ENCODE measurements at regions of chr11 and their contacts with region 1.

Region 1: DNA sequence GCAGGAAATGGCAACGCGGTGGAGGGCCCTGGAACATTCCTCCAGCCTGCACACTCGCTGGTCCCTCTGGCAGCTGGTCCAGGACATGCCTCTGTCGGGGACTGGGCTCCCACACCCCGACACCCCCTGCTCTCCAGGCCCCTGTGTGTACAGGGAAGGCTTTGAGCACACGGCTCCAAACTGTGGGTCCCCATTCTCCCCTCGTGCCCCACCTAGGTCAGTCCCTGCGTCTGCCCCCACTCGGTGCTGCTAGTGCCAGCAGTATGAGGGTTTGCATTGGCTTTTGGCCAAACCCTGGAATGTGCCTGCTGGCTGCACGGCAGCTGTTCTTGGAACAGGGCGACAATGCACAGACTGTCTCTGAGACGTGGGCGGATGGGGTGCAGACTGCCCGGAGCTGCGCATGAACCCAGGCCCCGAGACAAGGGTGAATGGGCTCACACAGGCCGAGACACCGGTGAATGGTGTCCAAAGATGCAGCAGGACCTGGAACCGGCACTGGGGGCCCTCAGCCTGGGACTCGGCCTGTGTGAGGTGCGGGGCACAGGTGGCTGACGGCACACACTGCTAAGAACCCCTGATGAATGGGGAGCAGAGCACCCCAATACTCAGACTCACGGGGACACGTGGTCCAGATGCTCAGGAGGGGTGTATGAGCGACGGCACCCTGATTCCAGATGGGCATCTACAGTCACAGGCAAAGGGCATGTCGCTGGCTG is 7.5 kb upstream of the SYT8 start:
- DNase-seq: peak in 1 of 2 experiments; percentile 33
- H3K4me3 ChIP-seq: no peak overlapping the region
- H3K4me3 Mint-ChIP-seq: no peak overlapping the region
- H3K27ac Mint-ChIP-seq: peak overlapping the region; percentile 87
- H3K4me1 ChIP-seq: peaks cover 66% of the 10 kb centered on the region
- H3K4me1 Mint-ChIP-seq: peaks cover 39% of the 10 kb centered on the region
- H3K27me3 ChIP-seq: no peaks in the 10 kb centered on the region
- H3K27me3 Mint-ChIP-seq: no peaks in the 10 kb centered on the region
- CTCF ChIP-seq: no peak

Region 2: DNA sequence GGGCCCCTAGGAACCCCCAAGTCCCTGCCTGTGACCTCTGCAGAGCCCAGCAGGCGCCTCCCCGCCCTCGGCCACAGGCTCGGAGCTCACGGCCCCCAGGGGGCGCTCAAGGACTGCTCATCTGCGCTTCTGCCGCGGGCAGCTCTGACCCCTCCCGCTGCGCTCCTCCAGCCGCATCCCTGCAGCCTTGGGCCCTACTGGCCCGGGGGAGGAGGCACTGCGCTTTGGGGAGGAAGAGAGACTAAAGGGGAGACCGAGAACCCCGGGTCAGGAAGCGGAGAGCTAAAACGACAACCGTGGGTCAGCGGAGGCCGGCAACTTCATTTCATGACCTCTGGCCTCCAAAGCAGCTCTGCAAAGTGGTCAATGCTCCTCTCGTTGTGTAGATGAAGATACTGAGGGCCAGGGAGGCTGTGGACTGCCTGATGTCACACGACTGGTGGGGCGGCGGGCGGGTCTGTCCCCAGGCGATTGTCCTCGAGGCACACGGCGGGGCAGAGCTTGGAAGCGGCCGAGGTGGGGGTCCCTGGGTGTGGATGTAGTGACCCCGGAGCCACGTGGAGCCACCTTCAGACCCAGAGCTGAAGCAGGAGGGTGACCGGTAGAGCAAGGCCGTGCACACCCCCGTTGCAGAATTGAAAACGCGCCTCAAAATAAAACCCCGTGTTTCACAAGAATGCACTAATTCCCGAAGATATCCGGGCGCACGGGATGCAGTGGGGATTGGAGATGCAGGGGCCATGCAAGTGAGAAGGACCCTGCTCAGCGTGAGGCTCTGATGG is 133.0 kb before region 1 on chr11:
- CTCF ChIA-PET with region 1: interaction called, 52 read pairs
- POLR2A ChIA-PET with region 1: interaction called, 6 read pairs
- intact Hi-C with region 1: loop called (anchors 1 kb)
- DNase-seq: peak; percentile 86 to 93
- H3K4me3 ChIP-seq: peak overlapping the region; percentile 49
- H3K4me3 Mint-ChIP-seq: peak overlapping the region; percentile 83
- H3K27ac Mint-ChIP-seq: peak overlapping the region; percentile 91
- H3K4me1 ChIP-seq: peaks cover 44% of the 10 kb centered on the region
- H3K4me1 Mint-ChIP-seq: peaks cover 34% of the 10 kb centered on the region
- H3K27me3 ChIP-seq: no peaks in the 10 kb centered on the region
- H3K27me3 Mint-ChIP-seq: no peaks in the 10 kb centered on the region
- CTCF ChIP-seq: peak; percentile 93 to 95

Region 3: DNA sequence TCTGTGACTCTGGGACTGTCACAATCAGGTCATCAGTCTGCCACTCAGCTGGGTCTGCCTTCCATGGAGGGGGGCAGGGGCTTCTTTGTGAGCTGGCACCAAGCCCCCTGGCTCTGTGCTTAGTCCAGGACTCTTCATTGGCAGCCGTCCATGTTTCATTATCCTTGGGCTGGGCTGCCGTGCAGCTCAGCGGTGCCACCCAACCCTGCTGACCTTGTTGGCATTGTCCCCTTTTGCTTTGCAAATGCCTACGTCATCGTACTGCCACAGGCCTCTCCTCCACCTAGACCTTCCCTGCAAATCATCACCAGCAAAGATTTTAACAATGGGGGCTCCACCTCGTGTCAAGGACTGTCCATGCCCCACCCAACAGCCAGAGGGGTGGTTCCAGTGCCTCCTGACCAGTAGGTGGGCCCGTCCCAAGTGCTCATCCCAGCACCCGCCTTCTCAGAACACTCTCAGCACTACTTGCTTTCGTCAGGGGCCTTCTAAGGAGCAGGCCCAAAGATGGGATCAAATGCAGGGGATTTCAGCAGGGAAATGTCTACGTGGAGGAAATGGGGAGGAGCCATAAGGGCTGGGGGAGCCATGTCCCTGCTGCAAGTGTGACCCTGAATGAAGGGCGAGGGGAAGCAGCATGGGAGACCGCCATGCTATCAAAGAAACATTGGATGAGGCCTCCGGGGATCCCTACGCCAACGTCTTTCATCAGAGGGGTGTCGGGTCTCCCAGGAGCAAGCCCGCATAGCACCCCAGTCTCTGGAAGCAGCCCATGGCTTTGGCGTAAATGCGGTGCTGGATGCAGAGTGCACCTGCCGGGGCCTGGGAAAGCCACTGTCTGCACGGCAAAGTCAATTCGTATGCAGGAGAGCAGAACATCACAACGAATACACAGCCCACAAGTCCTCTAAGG is 112.0 kb before region 1 on chr11:
- CTCF ChIA-PET with region 1: no interaction called
- POLR2A ChIA-PET with region 1: no interaction called
- intact Hi-C with region 1: no loop called
- DNase-seq: peak in 1 of 2 experiments; percentile 15
- H3K4me3 ChIP-seq: no peak overlapping the region
- H3K4me3 Mint-ChIP-seq: no peak overlapping the region
- H3K27ac Mint-ChIP-seq: no peak overlapping the region
- H3K4me1 ChIP-seq: no peaks in the 10 kb centered on the region
- H3K4me1 Mint-ChIP-seq: no peaks in the 10 kb centered on the region
- H3K27me3 ChIP-seq: no peaks in the 10 kb centered on the region
- H3K27me3 Mint-ChIP-seq: peaks cover 3% of the 10 kb centered on the region
- CTCF ChIP-seq: no peak

Region 4: GRCh38 chr11:1876361-1877063 is 49.3 kb after region 1 on chr11:
- CTCF ChIA-PET with region 1: interaction called, 10 read pairs
- POLR2A ChIA-PET with region 1: no interaction called
- intact Hi-C with region 1: loop called (anchors 5 kb)
- DNase-seq: peak in 1 of 2 experiments; percentile 63
- H3K4me3 ChIP-seq: no peak overlapping the region
- H3K4me3 Mint-ChIP-seq: no peak overlapping the region
- H3K27ac Mint-ChIP-seq: no peak overlapping the region
- H3K4me1 ChIP-seq: peaks cover 7% of the 10 kb centered on the region
- H3K4me1 Mint-ChIP-seq: no peaks in the 10 kb centered on the region
- H3K27me3 ChIP-seq: no peaks in the 10 kb centered on the region
- H3K27me3 Mint-ChIP-seq: no peaks in the 10 kb centered on the region
- CTCF ChIP-seq: peak; percentile 61 to 63

Region 5: GRCh38 chr11:1917671-1918516 is 90.6 kb after region 1 on chr11:
- CTCF ChIA-PET with region 1: interaction called, 4 read pairs
- POLR2A ChIA-PET with region 1: no interaction called
- intact Hi-C with region 1: loop called (anchors 1 kb)
- DNase-seq: no peak
- H3K4me3 ChIP-seq: no peak overlapping the region
- H3K4me3 Mint-ChIP-seq: no peak overlapping the region
- H3K27ac Mint-ChIP-seq: no peak overlapping the region
- H3K4me1 ChIP-seq: no peaks in the 10 kb centered on the region
- H3K4me1 Mint-ChIP-seq: no peaks in the 10 kb centered on the region
- H3K27me3 ChIP-seq: no peaks in the 10 kb centered on the region
- H3K27me3 Mint-ChIP-seq: no peaks in the 10 kb centered on the region
- CTCF ChIP-seq: peak; percentile 49 to 52

Region 6: GRCh38 chr11:1988667-1989317 is 161.5 kb after region 1 on chr11:
- CTCF ChIA-PET with region 1: interaction called, 11 read pairs
- POLR2A ChIA-PET with region 1: interaction called, 3 read pairs
- intact Hi-C with region 1: no loop called
- DNase-seq: no peak
- H3K4me3 ChIP-seq: no peak overlapping the region
- H3K4me3 Mint-ChIP-seq: no peak overlapping the region
- H3K27ac Mint-ChIP-seq: no peak overlapping the region
- H3K4me1 ChIP-seq: no peaks in the 10 kb centered on the region
- H3K4me1 Mint-ChIP-seq: no peaks in the 10 kb centered on the region
- H3K27me3 ChIP-seq: no peaks in the 10 kb centered on the region
- H3K27me3 Mint-ChIP-seq: no peaks in the 10 kb centered on the region
- CTCF ChIP-seq: no peak

Measured in Caco-2 (cell line).